ENCODE measurements at regions of chr19 and their contacts with region 1.

Region 1: DNA sequence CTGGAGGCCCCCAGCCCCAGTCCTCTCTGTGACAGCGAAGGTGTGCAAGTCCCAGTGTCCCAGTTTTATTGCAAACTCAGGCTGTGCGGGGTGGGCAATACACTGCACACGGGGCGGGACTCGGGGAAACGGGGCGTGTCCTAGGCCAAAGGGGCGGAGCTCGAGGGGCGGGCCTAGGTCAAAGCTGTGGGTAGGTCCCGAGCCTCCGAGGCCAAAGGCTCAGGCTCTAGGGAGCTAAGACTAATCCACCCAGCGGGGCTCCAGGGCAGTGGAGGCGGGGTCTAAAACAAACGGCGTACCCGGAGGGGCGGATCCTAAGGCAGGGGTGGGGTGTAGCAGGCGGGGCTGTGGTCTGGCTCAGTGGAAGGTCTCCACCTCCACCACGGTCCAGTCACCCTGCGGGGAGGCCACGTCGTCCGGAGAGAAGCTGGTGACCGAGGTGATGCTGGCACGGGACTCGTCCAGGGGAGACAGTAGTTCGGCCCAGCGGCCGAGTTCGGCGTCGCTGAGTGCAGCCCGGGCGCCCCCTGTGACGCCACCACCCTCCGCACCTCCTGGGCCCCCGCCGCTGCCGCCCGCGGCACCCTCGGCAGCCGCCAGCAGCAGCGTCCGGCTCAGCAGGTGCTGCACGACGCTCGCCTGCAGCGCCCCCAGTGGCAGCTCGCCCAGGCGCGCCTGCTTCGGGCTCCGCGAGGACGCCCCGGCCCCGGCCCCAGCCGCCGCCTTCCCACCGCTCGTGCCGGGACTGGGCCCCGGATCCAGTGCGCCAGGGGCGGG is 5.3 kb downstream of the PRR36 start:
- DNase-seq: peak; percentile 71 to 95 (median 85)
- ATAC-seq: peak; percentile 62
- H3K4me3 ChIP-seq: peak overlapping the region; percentile 61 to 62
- H3K4me3 Mint-ChIP-seq: peak overlapping the region; percentile 82
- H3K27ac ChIP-seq: peak overlapping the region; percentile 64 to 65
- H3K27ac Mint-ChIP-seq: peak overlapping the region; percentile 90
- H3K4me1 ChIP-seq: peaks cover 63% of the 10 kb centered on the region
- H3K4me1 Mint-ChIP-seq: peaks cover 44% of the 10 kb centered on the region
- H3K27me3 ChIP-seq: peaks cover 4 to 25% of the 10 kb centered on the region in 2 experiments
- H3K27me3 Mint-ChIP-seq: peaks cover 27% of the 10 kb centered on the region
- CTCF ChIP-seq: peak; percentile 82

Region 2: GRCh38 chr19:7636691-7637373 is 232.0 kb before region 1 on chr19 and contains the start of gene STXBP2:
- CTCF ChIA-PET with region 1: no interaction called
- POLR2A ChIA-PET with region 1: no interaction called
- intact Hi-C with region 1: loop called in 1 of 2 experiments (anchors 5 kb)
- DNase-seq: peak; percentile 89 to 99 (median 94)
- ATAC-seq: peak; percentile 99
- H3K4me3 ChIP-seq: peak within 1 kb of the TSS; percentile 36 to 93
- H3K4me3 Mint-ChIP-seq: peak within 1 kb of the TSS; percentile 85
- H3K27ac ChIP-seq: peak within 1 kb of the TSS; percentile 70 to 97
- H3K27ac Mint-ChIP-seq: peak within 1 kb of the TSS; percentile 91
- H3K4me1 ChIP-seq: peaks cover 24% of the 10 kb centered on the region
- H3K4me1 Mint-ChIP-seq: peaks cover 41% of the 10 kb centered on the region
- H3K27me3 ChIP-seq: no peaks in the 10 kb centered on the region
- H3K27me3 Mint-ChIP-seq: no peaks in the 10 kb centered on the region
- CTCF ChIP-seq: peak; percentile 34
- total RNA-seq, gene STXBP2: 260 to 270 TPM

Region 3: GRCh38 chr19:7852851-7853769 is 15.8 kb before region 1 on chr19:
- CTCF ChIA-PET with region 1: interaction called, 12 read pairs
- POLR2A ChIA-PET with region 1: no interaction called
- intact Hi-C with region 1: loop called in 1 of 2 experiments (anchors 1 kb)
- DNase-seq: peak; percentile 37 to 80 (median 69)
- ATAC-seq: peak; percentile 84
- H3K4me3 ChIP-seq: no peak overlapping the region
- H3K4me3 Mint-ChIP-seq: no peak overlapping the region
- H3K27ac ChIP-seq: no peak overlapping the region
- H3K27ac Mint-ChIP-seq: no peak overlapping the region
- H3K4me1 ChIP-seq: peaks cover 5% of the 10 kb centered on the region
- H3K4me1 Mint-ChIP-seq: peaks cover 2% of the 10 kb centered on the region
- H3K27me3 ChIP-seq: peaks cover 0 to 10% of the 10 kb centered on the region in 2 experiments
- H3K27me3 Mint-ChIP-seq: peaks cover 2% of the 10 kb centered on the region
- CTCF ChIP-seq: peak; percentile 85

Region 4: DNA sequence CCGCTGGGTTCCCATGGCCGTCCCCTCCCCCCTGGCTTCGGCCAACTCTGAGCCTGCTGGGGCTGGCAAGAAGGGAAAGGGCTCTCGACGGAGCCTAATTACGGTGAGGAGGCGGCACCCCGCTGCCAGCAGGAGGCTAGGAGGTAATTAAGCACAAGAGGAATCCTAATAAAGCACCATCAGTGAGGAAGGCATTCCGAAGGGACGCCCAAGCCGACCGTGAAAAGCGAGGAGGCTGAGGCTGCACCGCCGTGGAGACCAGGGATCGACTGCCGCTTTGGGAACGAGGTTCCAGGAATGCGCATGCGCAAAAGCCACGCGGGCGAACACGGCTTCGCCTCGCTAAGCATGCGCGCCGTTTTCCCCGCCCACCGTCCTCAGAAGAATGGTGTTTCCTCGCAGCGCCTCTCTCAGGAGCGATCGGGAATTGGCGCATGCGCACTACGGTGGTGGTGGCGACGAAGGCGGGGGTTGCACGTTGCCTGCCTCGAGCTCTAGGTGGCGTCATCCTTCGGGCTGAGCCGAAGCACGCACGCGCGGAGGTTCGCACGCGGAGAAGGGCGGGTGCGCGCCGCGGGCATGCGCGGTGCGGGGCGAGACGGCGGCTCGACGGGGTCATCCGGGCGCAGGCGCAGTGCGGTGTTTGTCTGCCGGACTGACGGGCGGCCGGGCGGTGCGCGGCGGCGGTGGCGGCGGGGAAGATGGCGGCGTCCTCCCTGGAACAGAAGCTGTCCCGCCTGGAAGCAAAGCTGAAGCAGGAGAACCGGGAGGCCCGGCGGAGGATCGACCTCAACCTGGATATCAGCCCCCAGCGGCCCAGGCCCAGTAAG is 34.6 kb after region 1 on chr19 and contains the start of gene MAP2K7:
- CTCF ChIA-PET with region 1: interaction called, 19 read pairs
- POLR2A ChIA-PET with region 1: interaction called, 8 read pairs
- intact Hi-C with region 1: loop called (anchors 1 kb)
- DNase-seq: peak; percentile 99 to 100 (median 100)
- ATAC-seq: peak; percentile 81
- H3K4me3 ChIP-seq: peak within 1 kb of the TSS; percentile 59 to 87
- H3K4me3 Mint-ChIP-seq: peak within 1 kb of the TSS; percentile 91
- H3K27ac ChIP-seq: peak within 1 kb of the TSS; percentile 65 to 84
- H3K27ac Mint-ChIP-seq: peak within 1 kb of the TSS; percentile 96
- H3K4me1 ChIP-seq: peaks cover 30% of the 10 kb centered on the region
- H3K4me1 Mint-ChIP-seq: peaks cover 23% of the 10 kb centered on the region
- H3K27me3 ChIP-seq: no peaks in the 10 kb centered on the region
- H3K27me3 Mint-ChIP-seq: no peaks in the 10 kb centered on the region
- CTCF ChIP-seq: peak; percentile 59
- total RNA-seq, gene MAP2K7: 127 to 135 TPM

Region 5: DNA sequence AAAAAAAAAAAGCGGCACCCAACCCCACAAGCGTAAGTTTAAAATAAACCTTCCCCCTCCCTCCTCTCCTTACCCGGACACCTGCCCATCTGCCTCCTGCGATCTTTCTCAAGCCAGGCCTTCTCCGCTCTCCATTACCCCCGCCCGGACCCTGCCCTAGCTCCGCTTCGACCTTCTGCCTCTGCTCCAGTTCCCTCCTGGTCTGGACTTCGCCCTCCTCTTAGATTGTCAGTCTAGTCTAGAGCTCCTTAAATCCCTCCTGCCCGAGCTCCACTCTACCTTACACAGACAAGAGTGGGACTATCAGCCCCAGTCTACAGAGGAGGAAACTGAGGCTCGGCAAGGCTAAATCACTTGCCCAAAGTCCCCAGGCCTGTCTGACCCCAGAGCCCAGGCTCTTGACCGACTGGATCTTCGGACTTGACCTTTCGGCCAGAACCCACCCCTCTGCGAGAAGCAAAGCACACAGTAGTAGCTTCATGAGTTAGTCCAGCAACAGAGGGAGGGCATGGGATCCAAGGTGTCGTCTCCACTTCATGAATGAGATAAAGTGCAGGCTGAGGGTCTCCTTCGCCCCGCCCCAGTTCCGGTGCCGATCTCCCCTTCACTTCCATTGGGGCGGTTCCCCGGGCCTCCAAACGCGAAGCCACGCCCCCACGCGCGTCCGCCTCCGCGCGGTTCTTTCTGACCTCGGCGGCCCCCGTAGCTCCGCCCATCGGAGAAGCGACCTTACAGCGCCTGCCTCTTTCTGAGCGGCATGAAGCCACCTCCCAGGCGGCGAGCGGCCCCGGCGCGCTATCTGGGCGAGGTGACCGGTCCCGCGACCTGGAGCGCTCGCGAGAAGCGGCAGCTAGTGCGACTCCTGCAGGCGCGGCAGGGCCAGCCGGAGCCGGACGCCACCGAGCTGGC is 51.0 kb after region 1 on chr19 and contains the start of gene SNAPC2:
- CTCF ChIA-PET with region 1: interaction called, 10 read pairs
- POLR2A ChIA-PET with region 1: interaction called, 13 read pairs
- intact Hi-C with region 1: loop called (anchors 1 kb)
- DNase-seq: peak; percentile 93 to 98 (median 96)
- ATAC-seq: peak; percentile 63
- H3K4me3 ChIP-seq: peak within 1 kb of the TSS; percentile 51 to 87
- H3K4me3 Mint-ChIP-seq: peak within 1 kb of the TSS; percentile 88
- H3K27ac ChIP-seq: peak within 1 kb of the TSS; percentile 55 to 65
- H3K27ac Mint-ChIP-seq: peak within 1 kb of the TSS; percentile 90
- H3K4me1 ChIP-seq: peaks cover 42% of the 10 kb centered on the region
- H3K4me1 Mint-ChIP-seq: peaks cover 48% of the 10 kb centered on the region
- H3K27me3 ChIP-seq: peaks cover 21 to 27% of the 10 kb centered on the region in 2 experiments
- H3K27me3 Mint-ChIP-seq: peaks cover 25% of the 10 kb centered on the region
- CTCF ChIP-seq: no peak
- total RNA-seq, gene SNAPC2: 15.4 to 17.0 TPM

Measured in CD8-positive, alpha-beta T cell (primary cell).